GM12878 (cell line): ENCODE measurements at regions of chr2 and their contacts with region 1.

Region 1: DNA sequence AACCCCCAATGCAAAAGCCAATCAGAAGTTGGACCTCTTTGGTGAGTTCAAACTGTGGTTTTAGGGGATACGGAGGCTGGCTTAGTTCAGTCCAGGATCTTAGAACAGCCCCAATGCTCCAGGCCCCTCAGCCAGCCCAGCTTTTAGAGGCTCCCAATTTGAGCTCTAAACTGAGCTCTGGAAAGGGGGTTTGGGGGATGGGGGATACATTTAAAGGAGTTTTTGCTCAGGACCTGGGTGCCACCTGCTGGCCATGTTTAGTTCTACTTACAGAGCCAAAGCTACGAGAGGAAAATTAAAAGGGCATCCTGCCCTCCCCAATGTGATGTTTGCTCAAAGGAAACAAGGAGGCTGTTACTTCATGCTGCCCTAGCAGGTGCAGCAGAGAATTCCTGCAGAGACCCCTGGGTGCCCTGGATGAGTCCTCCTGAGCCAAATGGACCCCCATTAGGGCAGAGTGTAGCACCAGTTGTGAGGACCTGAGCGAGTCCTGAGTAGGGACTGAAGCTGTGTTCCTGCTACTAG is 15.9 kb upstream of the TMEM214 start:
- DNase-seq: no peak
- ATAC-seq: peak; percentile 77
- H3K4me3 ChIP-seq: no peak overlapping the region
- H3K27ac ChIP-seq: no peak overlapping the region
- H3K4me1 ChIP-seq: no peaks in the 10 kb centered on the region
- H3K27me3 ChIP-seq: no peaks in the 10 kb centered on the region
- CTCF ChIP-seq: peak; percentile 58 to 66 (median 58)
- EP300 ChIP-seq: no peak
- POLR2A ChIP-seq: no peak
- RAD21 ChIP-seq: peak; percentile 74

Region 2: GRCh38 chr2:26591619-26592505 is 425.0 kb before region 1 on chr2:
- CTCF ChIA-PET with region 1: no interaction called
- POLR2A ChIA-PET with region 1: no interaction called
- RAD21 ChIA-PET with region 1: no interaction called
- SMC1A ChIA-PET with region 1: no interaction called
- in situ Hi-C with region 1: no loop called
- intact Hi-C with region 1: no loop called
- DNase-seq: no peak
- ATAC-seq: peak; percentile 85
- H3K4me3 ChIP-seq: no peak overlapping the region
- H3K27ac ChIP-seq: no peak overlapping the region
- H3K4me1 ChIP-seq: peaks cover 8% of the 10 kb centered on the region
- H3K27me3 ChIP-seq: peaks cover 0 to 15% of the 10 kb centered on the region in 2 experiments
- CTCF ChIP-seq: no peak
- EP300 ChIP-seq: no peak
- POLR2A ChIP-seq: no peak
- RAD21 ChIP-seq: no peak

Region 3: GRCh38 chr2:26913606-26913998 is 103.3 kb before region 1 on chr2:
- CTCF ChIA-PET with region 1: no interaction called
- POLR2A ChIA-PET with region 1: no interaction called
- RAD21 ChIA-PET with region 1: no interaction called
- SMC1A ChIA-PET with region 1: no interaction called
- in situ Hi-C with region 1: no loop called
- intact Hi-C with region 1: no loop called
- DNase-seq: no peak
- ATAC-seq: no peak
- H3K4me3 ChIP-seq: no peak overlapping the region
- H3K27ac ChIP-seq: no peak overlapping the region
- H3K4me1 ChIP-seq: no peaks in the 10 kb centered on the region
- H3K27me3 ChIP-seq: peaks cover 0 to 6% of the 10 kb centered on the region in 2 experiments; a peak in 3 of 4 replicates
- CTCF ChIP-seq: no peak
- EP300 ChIP-seq: no peak
- POLR2A ChIP-seq: no peak
- RAD21 ChIP-seq: no peak

Region 4: DNA sequence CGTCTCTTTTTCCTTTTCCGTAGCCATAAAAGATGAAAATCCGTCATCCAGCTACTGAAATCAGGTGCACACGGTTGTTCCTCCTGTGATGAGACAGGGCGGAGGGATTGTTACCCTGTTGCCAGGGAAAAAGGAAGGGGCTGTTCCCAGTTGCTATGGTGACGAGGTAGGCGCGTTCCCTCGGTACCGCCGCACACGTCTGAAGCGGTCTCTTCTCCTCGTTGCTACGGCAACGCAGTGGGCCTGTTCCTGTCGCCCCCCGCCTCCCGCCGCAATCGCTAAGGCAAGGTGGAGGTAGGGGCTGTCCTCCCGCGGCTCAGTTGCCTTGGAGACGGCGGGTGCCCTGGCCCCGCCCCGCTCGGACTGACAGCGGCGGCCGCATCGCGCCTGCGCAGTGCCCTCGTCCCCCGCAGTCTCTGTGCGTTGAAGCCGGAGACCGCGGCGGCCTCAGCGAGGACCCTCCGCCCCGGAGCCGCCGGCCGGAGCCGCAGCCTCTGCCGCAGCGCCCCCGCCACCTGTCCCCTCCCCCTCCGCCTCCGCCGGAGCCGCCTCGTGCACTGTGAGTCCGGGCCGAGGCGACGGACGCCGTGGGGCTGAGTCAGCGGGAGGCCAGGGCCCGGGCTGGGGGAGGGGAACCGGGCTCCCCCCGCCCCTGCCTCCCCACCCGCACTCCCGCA is 46.5 kb before region 1 on chr2 and contains the start of gene MAPRE3:
- CTCF ChIA-PET with region 1: interaction called, 153 read pairs
- POLR2A ChIA-PET with region 1: no interaction called
- RAD21 ChIA-PET with region 1: interaction called, 3 read pairs
- SMC1A ChIA-PET with region 1: interaction called, 6 read pairs
- in situ Hi-C with region 1: no loop called
- intact Hi-C with region 1: no loop called
- DNase-seq: no peak
- ATAC-seq: peak; percentile 97
- H3K4me3 ChIP-seq: peak within 1 kb of the TSS; percentile 67
- H3K27ac ChIP-seq: no peak within 1 kb of the TSS
- H3K4me1 ChIP-seq: no peaks in the 10 kb centered on the region
- H3K27me3 ChIP-seq: peaks cover 1 to 2% of the 10 kb centered on the region in 2 experiments; a peak in 3 of 4 replicates
- CTCF ChIP-seq: no peak
- EP300 ChIP-seq: no peak
- POLR2A ChIP-seq: no peak
- RAD21 ChIP-seq: no peak
- polyA plus RNA-seq, gene MAPRE3: 0.03 TPM in 1 of 2 experiments, not detected in the other